Prostate gland (tissue), 2 donors: ENCODE measurements at regions of chr4 and their contacts with region 1.

Region 1: DNA sequence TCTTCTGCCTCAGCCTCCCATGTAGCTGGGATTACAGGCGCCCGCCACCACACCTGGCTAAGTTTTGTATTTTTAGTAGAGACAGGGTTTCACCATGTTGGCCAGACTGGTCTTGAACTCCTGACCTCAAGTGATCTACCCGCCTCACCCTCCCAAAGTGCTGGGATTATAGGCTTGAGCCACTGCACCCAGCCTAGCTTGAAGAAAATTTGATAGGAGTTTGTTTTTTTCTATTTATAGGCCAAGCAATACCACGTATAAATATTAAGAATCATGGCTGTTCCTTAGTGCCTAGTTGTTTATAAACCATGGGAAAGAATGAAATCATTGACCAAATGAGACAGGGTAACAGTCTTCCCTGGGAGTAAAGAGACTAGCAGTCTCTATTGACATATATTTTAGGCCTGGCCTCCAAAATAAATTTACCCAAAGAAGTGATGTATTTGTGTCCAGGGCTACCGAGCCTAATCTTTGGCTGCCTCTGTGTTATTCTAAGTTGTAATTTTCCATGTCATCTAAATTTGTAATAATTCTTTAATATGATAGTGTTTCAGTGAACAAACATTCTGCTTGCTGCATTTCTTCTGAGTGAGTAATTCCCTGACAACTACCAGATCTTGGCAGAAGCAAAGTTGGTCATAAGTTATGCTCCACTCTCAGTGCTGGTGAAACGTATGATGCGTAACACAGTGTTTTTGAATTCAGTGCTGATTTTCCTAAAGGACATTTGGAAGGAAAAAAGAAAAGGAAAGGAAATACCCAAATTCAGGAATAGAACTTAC is 10.3 kb downstream of the PKD2 start:
- DNase-seq: no peak
- H3K4me3 ChIP-seq: no peak overlapping the region
- H3K27ac ChIP-seq: peak overlapping the region; percentile 42 to 64
- H3K4me1 ChIP-seq: no peaks in the 10 kb centered on the region
- H3K27me3 ChIP-seq: no peaks in the 10 kb centered on the region
- CTCF ChIP-seq: no peak
- POLR2A ChIP-seq: no peak

Region 2: GRCh38 chr4:87530868-87531267 is 486.8 kb before region 1 on chr4:
- intact Hi-C with region 1: loop called (anchors 10 kb)
- DNase-seq: peak; percentile 79
- H3K4me3 ChIP-seq: no peak overlapping the region
- H3K27ac ChIP-seq: peak overlapping the region; percentile 88
- H3K4me1 ChIP-seq: no peaks in the 10 kb centered on the region
- H3K27me3 ChIP-seq: no peaks in the 10 kb centered on the region
- CTCF ChIP-seq: no peak
- POLR2A ChIP-seq: no peak